ENCODE measurements at regions of chr3 and their contacts with region 1.

Region 1: GRCh38 chr3:50121416-50122032 is 32.8 kb downstream of the RBM5 start:
- DNase-seq: peak; percentile 84
- H3K4me3 Mint-ChIP-seq: no peak overlapping the region
- H3K27ac Mint-ChIP-seq: no peak overlapping the region
- H3K4me1 Mint-ChIP-seq: peaks cover 13% of the 10 kb centered on the region
- H3K27me3 Mint-ChIP-seq: no peaks in the 10 kb centered on the region
- CTCF ChIP-seq: peak; percentile 80

Region 2: DNA sequence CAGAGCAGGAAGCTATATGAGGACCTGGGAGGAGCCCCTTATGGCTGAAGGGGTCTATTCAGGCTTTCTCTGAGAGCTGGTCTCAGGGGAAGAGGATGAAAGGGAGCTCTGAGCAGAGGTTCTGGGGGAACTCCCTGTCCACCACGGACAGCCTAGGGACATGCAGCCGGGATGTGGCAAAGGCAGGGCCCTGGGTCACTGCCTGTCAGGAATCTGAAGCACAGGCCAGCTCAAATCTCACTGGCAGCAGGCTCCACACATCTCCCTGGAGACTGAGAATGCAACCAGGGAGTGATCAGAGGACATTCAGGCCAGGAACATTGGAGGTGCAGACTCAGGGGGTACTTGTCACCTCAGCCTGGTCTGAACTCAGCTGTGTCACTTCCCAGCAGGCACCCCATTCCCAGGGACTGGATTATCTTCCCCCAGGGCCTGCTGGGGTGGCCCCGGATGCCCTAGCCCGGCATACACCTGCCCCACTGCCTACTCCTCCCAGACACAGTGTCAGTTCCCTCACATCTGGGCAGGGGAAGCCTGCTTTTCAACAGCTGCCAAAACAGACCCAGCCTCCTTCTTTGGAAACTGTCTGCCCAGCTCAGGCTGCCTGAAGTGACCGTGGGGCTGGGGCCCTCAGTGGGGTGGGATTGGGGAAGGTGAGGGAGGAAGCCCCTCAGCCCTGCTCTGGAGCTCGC is 15.3 kb after region 1 on chr3:
- CTCF ChIA-PET with region 1: interaction called, 15 read pairs
- POLR2A ChIA-PET with region 1: interaction called, 7 read pairs
- intact Hi-C with region 1: no loop called
- DNase-seq: no peak
- H3K4me3 Mint-ChIP-seq: no peak overlapping the region
- H3K27ac Mint-ChIP-seq: no peak overlapping the region
- H3K4me1 Mint-ChIP-seq: peaks cover 7% of the 10 kb centered on the region
- H3K27me3 Mint-ChIP-seq: peaks cover 2% of the 10 kb centered on the region
- CTCF ChIP-seq: no peak

Region 3: GRCh38 chr3:50154840-50155474 is 33.4 kb after region 1 on chr3 and contains the start of gene SEMA3F:
- CTCF ChIA-PET with region 1: interaction called, 26 read pairs
- POLR2A ChIA-PET with region 1: interaction called, 11 read pairs
- intact Hi-C with region 1: loop called (anchors 2 kb)
- DNase-seq: peak; percentile 78
- H3K4me3 Mint-ChIP-seq: peak within 1 kb of the TSS; percentile 84
- H3K27ac Mint-ChIP-seq: peak within 1 kb of the TSS; percentile 61
- H3K4me1 Mint-ChIP-seq: peaks cover 63% of the 10 kb centered on the region
- H3K27me3 Mint-ChIP-seq: no peaks in the 10 kb centered on the region
- CTCF ChIP-seq: peak; percentile 44
- total RNA-seq, gene SEMA3F: 34.6 and 51.5 TPM in 2 replicates

Region 4: GRCh38 chr3:50163572-50164455 is 42.3 kb after region 1 on chr3:
- CTCF ChIA-PET with region 1: interaction called, 23 read pairs
- POLR2A ChIA-PET with region 1: interaction called, 7 read pairs
- intact Hi-C with region 1: no loop called
- DNase-seq: peak; percentile 98
- H3K4me3 Mint-ChIP-seq: peak overlapping the region; percentile 57
- H3K27ac Mint-ChIP-seq: peak overlapping the region; percentile 66
- H3K4me1 Mint-ChIP-seq: peaks cover 85% of the 10 kb centered on the region
- H3K27me3 Mint-ChIP-seq: no peaks in the 10 kb centered on the region
- CTCF ChIP-seq: no peak

Region 5: GRCh38 chr3:50217681-50218080 is 96.2 kb after region 1 on chr3:
- CTCF ChIA-PET with region 1: interaction called, 10 read pairs
- POLR2A ChIA-PET with region 1: interaction called, 4 read pairs
- intact Hi-C with region 1: no loop called
- DNase-seq: no peak
- H3K4me3 Mint-ChIP-seq: no peak overlapping the region
- H3K27ac Mint-ChIP-seq: no peak overlapping the region
- H3K4me1 Mint-ChIP-seq: no peaks in the 10 kb centered on the region
- H3K27me3 Mint-ChIP-seq: no peaks in the 10 kb centered on the region
- CTCF ChIP-seq: no peak

Region 6: DNA sequence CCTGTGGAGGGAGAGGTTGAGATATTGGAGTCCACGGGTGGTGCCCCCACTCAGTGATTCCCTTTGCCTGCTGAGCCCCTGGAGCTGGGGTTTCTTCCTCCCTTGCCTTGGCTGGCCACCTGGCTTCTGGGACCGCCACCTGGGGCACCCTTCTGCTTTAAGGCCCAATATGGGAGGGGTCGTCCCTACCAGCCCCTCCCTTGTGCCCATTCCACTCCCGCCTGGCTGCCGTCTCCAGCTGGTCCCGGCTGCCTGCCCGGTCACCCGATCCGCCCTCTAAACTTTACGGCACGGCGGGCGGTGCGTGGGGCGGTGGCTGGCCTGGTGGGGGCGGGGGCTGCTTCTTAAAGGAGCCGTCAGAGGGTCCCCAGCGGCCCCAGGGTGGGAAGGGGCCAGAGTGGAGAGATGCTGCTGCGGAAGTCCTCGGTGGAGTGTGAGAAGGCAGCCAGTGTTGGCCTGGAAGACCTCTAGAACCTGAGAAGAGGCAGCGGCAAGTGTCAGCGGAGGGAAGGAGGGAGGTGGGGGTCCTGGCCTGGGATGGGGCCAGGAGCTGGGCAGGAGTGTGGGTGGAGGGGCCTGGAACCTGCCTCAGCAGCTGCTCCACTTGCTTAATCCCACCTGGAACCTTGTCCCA is 145.9 kb after region 1 on chr3:
- CTCF ChIA-PET with region 1: interaction called, 10 read pairs
- POLR2A ChIA-PET with region 1: interaction called, 4 read pairs
- intact Hi-C with region 1: loop called (anchors 5 kb)
- DNase-seq: no peak
- H3K4me3 Mint-ChIP-seq: no peak overlapping the region
- H3K27ac Mint-ChIP-seq: no peak overlapping the region
- H3K4me1 Mint-ChIP-seq: peaks cover 34% of the 10 kb centered on the region
- H3K27me3 Mint-ChIP-seq: no peaks in the 10 kb centered on the region
- CTCF ChIP-seq: no peak

Region 7: DNA sequence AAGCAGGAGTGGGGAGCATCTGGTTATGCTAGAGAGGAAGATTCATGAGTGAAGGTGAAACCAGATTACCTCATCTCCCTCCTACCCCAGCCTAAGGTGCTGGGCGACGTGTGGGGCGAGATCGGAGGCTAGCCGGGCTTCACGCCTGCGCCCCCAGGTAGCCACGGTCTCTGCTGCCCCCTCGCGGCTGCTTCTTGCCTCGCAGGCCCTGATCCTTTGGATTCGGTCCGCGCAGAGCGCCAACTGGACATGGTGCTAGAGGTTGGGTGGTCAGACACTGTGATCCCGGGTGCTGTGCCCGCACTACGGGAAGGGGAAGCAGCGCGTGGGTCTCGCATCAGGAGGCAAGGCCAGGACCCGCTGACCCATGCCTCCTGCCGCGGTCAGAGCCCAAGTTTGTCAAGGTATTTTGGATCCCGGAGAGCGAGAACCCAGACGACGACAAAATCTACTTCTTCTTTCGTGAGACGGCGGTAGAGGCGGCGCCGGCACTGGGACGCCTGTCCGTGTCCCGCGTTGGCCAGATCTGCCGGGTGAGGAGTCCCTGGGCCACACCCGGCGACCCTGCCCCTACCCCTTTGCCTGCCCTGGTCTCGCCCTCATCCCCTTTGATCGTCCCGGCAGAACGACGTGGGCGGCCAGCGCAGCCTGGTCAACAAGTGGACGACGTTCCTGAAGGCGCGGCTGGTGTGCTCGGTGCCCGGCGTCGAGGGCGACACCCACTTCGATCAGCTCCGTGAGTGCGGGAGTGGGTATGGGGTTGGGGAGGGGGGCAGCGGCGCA is 151.6 kb after region 1 on chr3:
- CTCF ChIA-PET with region 1: interaction called, 10 read pairs
- POLR2A ChIA-PET with region 1: interaction called, 4 read pairs
- intact Hi-C with region 1: loop called (anchors 5 kb)
- DNase-seq: peak; percentile 85
- H3K4me3 Mint-ChIP-seq: peak overlapping the region; percentile 45
- H3K27ac Mint-ChIP-seq: no peak overlapping the region
- H3K4me1 Mint-ChIP-seq: peaks cover 42% of the 10 kb centered on the region
- H3K27me3 Mint-ChIP-seq: no peaks in the 10 kb centered on the region
- CTCF ChIP-seq: peak; percentile 94

Measured in MCF 10A (cell line).